Activated CD4-positive, alpha-beta T cell treated with anti-CD3 and anti-CD28 coated beads for 36 hours (primary cell): ENCODE measurements at regions of chr7 and their contacts with region 1.

Region 1: DNA sequence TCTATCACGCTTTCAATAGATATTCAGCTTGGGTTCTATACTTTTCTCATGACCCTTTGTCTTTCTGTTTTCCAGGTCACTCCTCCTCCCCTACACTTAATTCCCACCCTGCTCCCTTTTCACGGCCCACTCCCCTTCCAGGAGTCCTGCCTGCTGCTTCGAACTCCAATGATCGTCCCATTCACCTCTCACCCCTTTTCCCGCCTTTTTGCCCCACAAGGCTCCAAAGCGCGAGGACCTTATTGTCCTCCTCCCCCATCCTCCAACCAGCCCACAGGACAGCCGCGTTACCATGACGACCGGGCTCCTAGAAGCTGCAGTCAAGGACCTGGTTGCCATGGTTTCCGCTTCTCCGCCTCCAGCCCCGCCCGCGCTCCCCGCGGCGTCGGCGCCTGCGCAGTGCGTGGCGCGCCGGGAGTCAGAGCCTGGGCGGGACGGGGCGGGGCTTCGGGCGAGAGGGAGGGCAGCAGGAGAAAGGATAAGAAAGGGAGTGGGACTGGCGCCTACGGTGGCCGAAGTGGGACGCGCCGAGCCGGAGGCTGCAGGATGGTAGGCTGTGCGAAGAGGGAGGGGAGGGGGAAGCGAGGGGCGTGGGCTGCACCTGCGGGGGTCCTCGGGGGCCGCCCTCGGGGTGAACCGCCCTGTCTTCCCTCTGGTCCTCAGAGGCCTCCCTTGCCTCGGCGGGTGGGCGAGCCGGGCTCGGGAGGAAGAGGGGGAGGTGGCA is at the start of gene AP1S1:
- DNase-seq: peak; percentile 97
- ATAC-seq: peak; percentile 90
- H3K4me3 Mint-ChIP-seq: peak within 1 kb of the TSS; percentile 76
- H3K27ac Mint-ChIP-seq: peak within 1 kb of the TSS; percentile 22
- H3K4me1 Mint-ChIP-seq: peaks cover 12% of the 10 kb centered on the region
- H3K27me3 Mint-ChIP-seq: peaks cover 2% of the 10 kb centered on the region
- total RNA-seq, gene AP1S1: 33.7 to 43.0 TPM

Region 2: DNA sequence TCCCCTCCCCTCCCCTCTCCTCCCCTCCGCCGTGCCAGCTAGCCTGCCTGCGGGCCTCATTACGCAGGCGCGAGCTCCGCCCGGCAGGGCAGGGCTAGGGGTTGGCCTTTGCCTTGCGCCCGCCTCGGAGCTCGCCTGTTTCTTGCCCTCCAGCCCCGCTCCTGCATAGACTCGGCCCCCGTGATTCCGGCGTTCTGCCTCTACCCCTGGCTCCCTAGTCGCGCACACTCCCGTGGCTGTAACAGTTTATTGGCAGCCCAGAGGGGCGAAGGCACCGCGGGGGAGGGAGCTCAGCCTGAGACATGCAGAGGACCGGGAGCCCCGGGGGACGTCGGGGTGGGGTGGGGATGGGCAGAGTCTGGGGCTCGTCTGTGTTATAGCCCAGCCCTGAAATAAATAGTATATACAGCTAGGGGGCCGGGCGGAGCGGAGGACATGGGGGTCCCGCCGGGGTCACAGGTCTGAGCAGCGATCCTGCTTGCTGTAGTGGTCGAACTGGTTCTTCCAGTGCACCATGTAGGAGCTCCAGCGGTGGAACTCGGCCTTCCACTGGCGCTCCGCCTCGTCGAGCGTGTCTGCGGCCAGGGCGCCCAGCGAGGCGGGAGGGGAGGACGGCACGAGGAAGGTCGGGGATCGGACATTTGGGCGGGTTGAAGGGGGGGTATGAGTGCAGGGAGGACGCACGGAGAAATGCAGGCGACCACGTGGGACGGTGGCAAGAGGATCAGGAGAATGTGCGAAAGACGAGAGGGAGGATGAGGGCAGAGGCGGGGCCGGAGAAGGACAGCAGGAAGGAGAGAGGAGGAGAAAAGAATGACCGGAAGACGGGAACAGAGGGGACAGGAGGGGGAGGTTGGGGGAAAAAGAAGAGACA is 264.1 kb before region 1 on chr7:
- CTCF ChIA-PET with region 1: no interaction called
- POLR2A ChIA-PET with region 1: no interaction called
- intact Hi-C with region 1: loop called in 1 of 2 experiments (anchors 5 kb)
- DNase-seq: peak; percentile 96
- ATAC-seq: peak; percentile 95
- H3K4me3 Mint-ChIP-seq: peak overlapping the region; percentile 77
- H3K27ac Mint-ChIP-seq: no peak overlapping the region
- H3K4me1 Mint-ChIP-seq: peaks cover 38% of the 10 kb centered on the region
- H3K27me3 Mint-ChIP-seq: peaks cover 14% of the 10 kb centered on the region

Region 3: DNA sequence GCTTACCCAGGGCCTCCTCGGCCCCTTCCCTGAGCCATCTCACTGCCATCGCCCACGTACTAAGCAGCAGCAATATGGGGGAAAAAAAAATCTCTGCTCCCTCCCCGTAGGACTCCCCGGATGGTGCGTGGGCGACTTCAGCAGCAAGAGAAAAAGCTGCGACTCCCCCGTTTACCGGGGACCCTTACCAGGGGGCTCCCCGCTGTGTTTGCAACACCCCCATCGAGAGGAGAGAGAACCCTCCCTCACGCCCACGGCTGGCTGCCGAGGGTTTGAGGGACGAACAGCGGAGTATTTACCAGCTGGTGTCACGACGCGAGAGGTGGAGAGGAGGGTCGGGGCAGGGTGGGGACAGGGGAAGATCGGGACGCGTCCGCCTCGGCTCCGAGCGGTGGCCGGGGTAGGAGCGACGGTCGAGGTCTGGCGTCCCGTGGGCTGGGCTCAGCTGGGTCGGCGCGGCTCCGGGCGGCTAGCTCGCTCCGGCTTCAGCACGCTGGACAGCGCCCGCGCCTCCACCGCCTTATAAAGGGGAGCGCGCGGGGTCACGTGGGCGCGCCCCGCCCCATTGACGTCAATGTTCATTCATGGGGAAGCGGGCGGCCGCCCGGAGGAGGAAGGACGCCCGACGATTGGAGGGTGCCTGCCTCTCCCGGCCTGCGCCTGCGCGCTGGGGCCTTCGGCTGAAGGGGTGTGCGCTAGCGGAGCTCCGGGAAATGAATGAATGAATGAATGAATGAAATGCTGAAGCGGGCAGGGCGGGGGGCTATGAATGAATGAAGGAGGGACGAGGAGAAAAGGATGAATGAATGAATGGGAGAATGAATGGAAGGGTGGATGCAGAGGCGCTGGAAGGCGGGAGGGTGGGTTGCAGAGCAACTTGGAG is 11.2 kb after region 1 on chr7 and contains the start of gene VGF:
- CTCF ChIA-PET with region 1: interaction called, 7 read pairs
- POLR2A ChIA-PET with region 1: no interaction called
- intact Hi-C with region 1: loop called (anchors 1 to 2 kb)
- DNase-seq: peak; percentile 97
- ATAC-seq: peak; percentile 79
- H3K4me3 Mint-ChIP-seq: peak within 1 kb of the TSS; percentile 66
- H3K27ac Mint-ChIP-seq: peak within 1 kb of the TSS; percentile 38
- H3K4me1 Mint-ChIP-seq: peaks cover 57% of the 10 kb centered on the region
- H3K27me3 Mint-ChIP-seq: peaks cover 52% of the 10 kb centered on the region
- total RNA-seq, gene VGF: 0.09 to 0.11 TPM

Region 4: GRCh38 chr7:101217388-101218235 is 63.5 kb after region 1 on chr7 and contains the starts of genes PLOD3 and ZNHIT1:
- CTCF ChIA-PET with region 1: no interaction called
- POLR2A ChIA-PET with region 1: no interaction called
- intact Hi-C with region 1: loop called in 1 of 2 experiments (anchors 1 kb)
- DNase-seq: peak; percentile 97
- ATAC-seq: peak; percentile 88
- H3K4me3 Mint-ChIP-seq: peak within 1 kb of the TSS; percentile 99
- H3K27ac Mint-ChIP-seq: peak within 1 kb of the TSS; percentile 85
- H3K4me1 Mint-ChIP-seq: peaks cover 31% of the 10 kb centered on the region
- H3K27me3 Mint-ChIP-seq: no peaks in the 10 kb centered on the region
- total RNA-seq, gene PLOD3: 30.7 to 35.9 TPM
- total RNA-seq, gene ZNHIT1: 44.2 TPM

Region 5: DNA sequence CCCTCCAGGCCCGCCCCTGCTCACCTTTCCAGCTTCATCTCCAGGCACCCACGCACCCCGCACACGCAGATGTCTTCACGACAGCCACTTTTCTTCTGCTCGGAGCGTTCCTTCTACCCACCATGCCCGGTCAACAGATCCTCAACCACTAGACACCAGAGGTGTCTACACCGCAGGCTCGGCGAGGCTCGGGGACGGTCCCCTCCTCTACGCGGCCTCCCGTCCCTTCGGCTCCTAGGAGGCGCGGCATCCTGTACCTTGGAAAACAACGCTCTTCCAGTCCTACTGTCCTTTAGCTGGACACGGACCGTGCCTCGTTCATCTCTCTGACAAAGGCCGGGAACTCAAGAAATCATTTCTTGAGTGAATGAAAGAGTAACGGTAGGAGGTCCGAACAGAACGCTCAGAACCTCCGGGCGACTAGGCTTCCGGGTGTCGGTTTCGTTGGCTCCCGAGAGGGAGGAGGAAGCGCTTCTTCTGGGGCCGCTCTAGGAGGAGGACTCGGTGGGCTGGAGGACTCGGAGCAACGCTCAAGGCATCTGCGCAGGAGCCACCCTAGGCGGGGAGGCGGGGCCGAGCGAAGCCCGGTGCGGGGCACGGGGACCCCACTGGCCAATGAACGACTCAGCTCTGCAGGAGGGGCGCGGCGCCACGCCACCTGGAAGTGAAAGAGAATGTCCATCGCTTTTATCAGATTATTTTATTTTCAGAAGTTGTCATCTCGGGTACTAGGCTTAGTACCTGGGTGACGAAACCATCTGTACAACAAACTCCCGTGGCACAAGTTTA is 97.9 kb after region 1 on chr7:
- CTCF ChIA-PET with region 1: no interaction called
- POLR2A ChIA-PET with region 1: no interaction called
- intact Hi-C with region 1: loop called in 1 of 2 experiments (anchors 1 kb)
- DNase-seq: peak; percentile 99
- ATAC-seq: peak; percentile 100
- H3K4me3 Mint-ChIP-seq: peak overlapping the region; percentile 96
- H3K27ac Mint-ChIP-seq: peak overlapping the region; percentile 96
- H3K4me1 Mint-ChIP-seq: peaks cover 26% of the 10 kb centered on the region
- H3K27me3 Mint-ChIP-seq: peaks cover 5% of the 10 kb centered on the region